AG04450 (cell line): ENCODE measurements at regions of chr10 and their contacts with region 1.

Region 1: DNA sequence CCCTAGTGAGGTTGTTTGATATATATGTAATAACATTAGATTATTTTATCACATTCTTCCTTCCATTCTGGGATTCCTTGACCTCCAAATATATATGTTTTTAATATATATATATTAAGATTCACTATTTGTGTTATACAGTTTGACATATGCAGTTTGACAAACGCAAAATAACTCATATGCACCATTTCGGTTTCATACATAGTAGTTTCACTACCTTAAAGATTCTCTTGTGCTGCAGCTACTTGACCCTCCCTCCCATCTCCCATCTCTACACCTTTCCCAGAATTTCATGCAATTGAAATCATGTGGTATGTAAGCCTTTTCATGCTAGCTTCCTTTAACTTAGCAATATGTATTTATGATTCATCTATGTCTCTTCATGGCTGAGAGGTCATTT is 1244.4 kb downstream of the SORCS3 start:
- DNase-seq: no peak
- H3K4me3 ChIP-seq: no peak overlapping the region
- H3K27ac ChIP-seq: no peak overlapping the region
- H3K27me3 ChIP-seq: no peaks in the 10 kb centered on the region
- CTCF ChIP-seq: no peak

Region 2: DNA sequence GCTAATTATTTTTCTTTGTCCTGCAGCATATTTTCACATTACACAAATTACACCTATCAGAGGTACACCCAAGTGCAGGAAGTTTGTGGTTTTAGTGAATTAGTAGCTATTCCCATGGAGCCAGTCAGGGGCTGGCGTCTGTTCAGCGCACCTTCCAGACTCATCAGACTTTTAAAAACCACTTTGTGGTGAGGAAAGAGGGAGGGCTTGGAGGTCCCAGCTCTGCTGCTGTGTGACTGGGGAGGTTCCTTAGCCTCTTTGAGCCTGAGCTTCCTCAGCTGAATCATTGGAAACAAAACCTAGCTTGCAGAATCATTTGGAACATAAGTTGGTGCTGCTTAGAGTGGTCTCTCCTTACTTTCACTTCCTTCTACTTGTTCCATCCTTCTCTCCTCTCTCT is 1069.0 kb before region 1 on chr10:
- CTCF ChIA-PET with region 1: no interaction called
- POLR2A ChIA-PET with region 1: interaction called, 17 read pairs
- DNase-seq: no peak
- H3K4me3 ChIP-seq: no peak overlapping the region
- H3K27ac ChIP-seq: no peak overlapping the region
- H3K27me3 ChIP-seq: no peaks in the 10 kb centered on the region
- CTCF ChIP-seq: no peak

Region 3: DNA sequence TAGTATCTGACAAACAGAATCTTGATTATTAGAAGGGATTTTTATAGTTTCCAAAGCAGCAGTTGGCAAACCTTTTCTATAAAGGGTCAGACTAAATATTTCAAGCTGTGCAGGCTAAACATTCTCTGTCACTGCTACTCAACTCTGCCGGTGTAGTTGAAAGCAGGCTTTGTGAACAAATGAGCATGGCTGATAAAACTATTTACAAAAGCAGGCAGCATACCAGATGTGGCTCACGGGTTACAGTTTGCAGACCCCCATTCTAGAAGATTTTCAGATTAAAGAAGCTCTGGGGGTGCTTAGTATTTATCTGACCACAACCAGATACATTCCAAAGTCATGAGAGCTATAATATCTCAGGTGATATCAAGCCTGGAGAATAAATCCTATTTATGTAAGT is 261.5 kb after region 1 on chr10:
- CTCF ChIA-PET with region 1: no interaction called
- POLR2A ChIA-PET with region 1: no interaction called
- DNase-seq: no peak
- H3K4me3 ChIP-seq: no peak overlapping the region
- H3K27ac ChIP-seq: no peak overlapping the region
- H3K27me3 ChIP-seq: no peaks in the 10 kb centered on the region
- CTCF ChIP-seq: no peak